ENCODE measurements at regions of chr22 and their contacts with region 1.

Region 1: GRCh38 chr22:31970490-31971444 is 26.4 kb downstream of the YWHAH start:
- DNase-seq: peak; percentile 93
- H3K4me3 ChIP-seq: peak overlapping the region; percentile 41
- H3K27ac ChIP-seq: no peak overlapping the region
- H3K4me1 ChIP-seq: no peaks in the 10 kb centered on the region
- H3K27me3 ChIP-seq: no peaks in the 10 kb centered on the region
- CTCF ChIP-seq: peak; percentile 93

Region 2: DNA sequence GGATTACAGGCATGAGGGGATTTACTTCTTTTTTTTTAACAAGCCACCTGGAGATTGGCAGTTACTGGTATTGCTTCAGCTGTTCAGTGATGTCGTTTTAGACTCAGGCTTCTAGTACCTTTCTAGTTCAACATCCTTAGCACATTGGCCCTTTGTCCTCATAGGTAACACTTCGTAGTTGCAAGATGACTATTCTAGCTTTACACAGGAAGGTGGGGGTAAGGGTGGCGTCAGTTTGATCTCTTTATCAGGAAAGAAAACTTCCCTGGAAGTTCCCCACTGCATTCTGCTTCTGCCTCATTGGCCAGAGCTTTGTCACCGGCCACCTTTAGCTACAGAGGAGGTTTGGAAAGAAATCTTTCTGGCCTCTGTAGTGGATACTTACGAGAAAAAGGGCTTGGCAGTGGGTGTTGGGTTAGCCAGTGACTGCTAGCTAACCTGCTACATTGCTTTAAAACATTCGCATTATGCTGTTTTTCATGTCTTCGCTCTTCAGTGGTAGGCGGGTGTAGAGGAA is 433.7 kb before region 1 on chr22:
- intact Hi-C with region 1: no loop called
- DNase-seq: no peak
- H3K4me3 ChIP-seq: no peak overlapping the region
- H3K27ac ChIP-seq: no peak overlapping the region
- H3K4me1 ChIP-seq: no peaks in the 10 kb centered on the region
- H3K27me3 ChIP-seq: no peaks in the 10 kb centered on the region
- CTCF ChIP-seq: no peak

Region 3: GRCh38 chr22:31911565-31912406 is 59.0 kb before region 1 on chr22:
- intact Hi-C with region 1: no loop called
- DNase-seq: peak; percentile 59
- H3K4me3 ChIP-seq: no peak overlapping the region
- H3K27ac ChIP-seq: peak overlapping the region; percentile 34
- H3K4me1 ChIP-seq: no peaks in the 10 kb centered on the region
- H3K27me3 ChIP-seq: no peaks in the 10 kb centered on the region
- CTCF ChIP-seq: no peak

Region 4: GRCh38 chr22:32265882-32266767 is 295.4 kb after region 1 on chr22:
- intact Hi-C with region 1: loop called (anchors 5 kb)
- DNase-seq: peak; percentile 70
- H3K4me3 ChIP-seq: no peak overlapping the region
- H3K27ac ChIP-seq: no peak overlapping the region
- H3K4me1 ChIP-seq: no peaks in the 10 kb centered on the region
- H3K27me3 ChIP-seq: no peaks in the 10 kb centered on the region
- CTCF ChIP-seq: peak; percentile 80

Measured in colonic mucosa (tissue), 4 donors.